BJ (cell line): ENCODE measurements at regions of chr11 and their contacts with region 1.

Region 1: DNA sequence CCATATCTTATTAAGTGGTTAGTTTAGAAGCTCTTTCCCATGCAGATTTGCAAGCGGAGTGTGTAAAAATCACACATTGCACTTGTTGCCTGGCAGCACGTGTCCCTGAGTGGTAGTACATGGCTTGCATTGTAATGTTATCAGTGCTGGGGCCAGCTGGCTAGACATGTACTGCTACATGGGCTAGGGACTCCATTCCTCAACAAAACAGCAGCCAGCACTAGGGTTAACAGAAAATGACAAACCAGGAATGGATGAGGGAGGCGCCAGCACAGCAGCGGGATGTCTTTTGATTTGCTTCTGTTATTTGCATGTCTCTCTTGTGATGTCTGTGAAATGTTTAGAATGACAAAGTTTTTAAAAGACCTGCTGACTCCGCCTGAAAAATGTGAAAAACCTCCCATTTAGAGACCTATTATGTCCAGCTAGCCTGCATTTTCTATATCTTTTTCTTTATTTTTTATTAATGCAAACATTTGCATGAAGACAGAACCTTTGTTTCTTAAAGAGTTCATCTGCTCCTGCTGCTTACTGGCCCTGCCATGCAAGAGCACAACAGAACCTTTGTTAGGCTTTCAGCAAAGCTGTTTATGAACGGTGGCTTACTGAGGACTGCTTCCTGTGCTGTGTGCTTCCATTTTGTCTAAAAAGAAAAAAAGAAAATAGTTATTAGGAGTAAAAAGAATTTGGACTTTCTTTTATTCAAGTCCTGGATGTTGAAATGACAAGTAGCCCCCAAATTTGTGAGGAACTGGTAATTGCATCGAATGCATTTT is 40.7 kb downstream of the CSTPP1 start:
- DNase-seq: no peak
- H3K4me3 ChIP-seq: no peak overlapping the region
- H3K27me3 ChIP-seq: no peaks in the 10 kb centered on the region
- CTCF ChIP-seq: no peak

Region 2: GRCh38 chr11:46963848-46964247 is 13.4 kb before region 1 on chr11:
- CTCF ChIA-PET with region 1: no interaction called
- POLR2A ChIA-PET with region 1: interaction called, 11 read pairs
- DNase-seq: no peak
- H3K4me3 ChIP-seq: no peak overlapping the region
- H3K27me3 ChIP-seq: no peaks in the 10 kb centered on the region
- CTCF ChIP-seq: no peak